CD8-positive, alpha-beta memory T cell (primary cell): ENCODE measurements at regions of chr14 and their contacts with region 1.

Region 1: GRCh38 chr14:21978184-21978998 is 304.8 kb upstream of the OR4E1 start:
- DNase-seq: peak; percentile 29 to 74 (median 41)
- H3K4me3 ChIP-seq: peak overlapping the region; percentile 15
- H3K4me3 Mint-ChIP-seq: peak overlapping the region; percentile 34 to 84 (median 70)
- H3K27ac ChIP-seq: no peak overlapping the region
- H3K27ac Mint-ChIP-seq: peak overlapping the region in 7 of 8 donors; percentile 17 to 86 (median 58)
- H3K4me1 ChIP-seq: no peaks in the 10 kb centered on the region
- H3K4me1 Mint-ChIP-seq: peaks cover 9 to 23% (median 9%) of the 10 kb centered on the region in 3 donors
- H3K27me3 ChIP-seq: no peaks in the 10 kb centered on the region
- H3K27me3 Mint-ChIP-seq: peaks cover 0 to 4% of the 10 kb centered on the region in 2 donors

Region 2: GRCh38 chr14:21933681-21934080 is 44.7 kb before region 1 on chr14:
- CTCF ChIA-PET with region 1: no interaction called
- POLR2A ChIA-PET with region 1: no interaction called
- DNase-seq: peak in 1 of 5 donors; percentile 18
- H3K4me3 ChIP-seq: no peak overlapping the region
- H3K4me3 Mint-ChIP-seq: no peak overlapping the region
- H3K27ac ChIP-seq: no peak overlapping the region
- H3K27ac Mint-ChIP-seq: no peak overlapping the region
- H3K4me1 ChIP-seq: no peaks in the 10 kb centered on the region
- H3K4me1 Mint-ChIP-seq: peaks cover 0 to 3% (median 3%) of the 10 kb centered on the region in 3 donors
- H3K27me3 ChIP-seq: no peaks in the 10 kb centered on the region
- H3K27me3 Mint-ChIP-seq: peaks cover 2 to 4% of the 10 kb centered on the region in 2 donors

Region 3: DNA sequence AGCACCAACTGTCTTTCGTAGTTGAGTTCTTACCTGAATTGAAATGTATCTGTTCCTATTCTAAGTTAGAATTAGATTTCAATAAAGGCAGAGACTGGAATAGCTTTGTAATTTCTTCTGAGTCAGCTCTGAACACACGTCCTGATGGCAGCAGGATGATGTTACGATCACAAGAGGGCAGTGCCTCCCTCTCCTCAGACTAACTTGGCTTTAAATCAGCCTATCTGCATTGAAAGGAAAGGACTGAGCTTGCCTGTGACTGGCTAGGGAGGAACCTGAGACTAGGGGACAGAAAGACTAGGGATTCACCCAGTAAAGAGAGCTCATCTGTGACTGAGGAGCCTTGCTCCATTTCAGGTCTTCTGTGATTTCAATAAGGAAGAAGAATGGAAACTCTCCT is 18.9 kb after region 1 on chr14:
- CTCF ChIA-PET with region 1: interaction called, 27 read pairs
- POLR2A ChIA-PET with region 1: interaction called, 4 read pairs
- DNase-seq: peak in 3 of 5 donors; percentile 36 to 57 (median 47)
- H3K4me3 ChIP-seq: peak overlapping the region; percentile 18
- H3K4me3 Mint-ChIP-seq: peak overlapping the region; percentile 79 to 96 (median 90)
- H3K27ac ChIP-seq: no peak overlapping the region
- H3K27ac Mint-ChIP-seq: peak overlapping the region; percentile 54 to 91 (median 86)
- H3K4me1 ChIP-seq: no peaks in the 10 kb centered on the region
- H3K4me1 Mint-ChIP-seq: peaks cover 3 to 15% (median 4%) of the 10 kb centered on the region in 3 donors
- H3K27me3 ChIP-seq: no peaks in the 10 kb centered on the region
- H3K27me3 Mint-ChIP-seq: no peaks in the 10 kb centered on the region

Region 4: GRCh38 chr14:22047115-22047514 is 68.7 kb after region 1 on chr14:
- CTCF ChIA-PET with region 1: no interaction called
- POLR2A ChIA-PET with region 1: no interaction called
- DNase-seq: peak in 3 of 5 donors; percentile 37 to 59 (median 57)
- H3K4me3 ChIP-seq: no peak overlapping the region
- H3K4me3 Mint-ChIP-seq: peak overlapping the region in 3 of 7 donors; percentile 58 to 63 (median 60)
- H3K27ac ChIP-seq: no peak overlapping the region
- H3K27ac Mint-ChIP-seq: peak overlapping the region in 7 of 8 donors; percentile 42 to 80 (median 68)
- H3K4me1 ChIP-seq: peaks cover 8% of the 10 kb centered on the region
- H3K4me1 Mint-ChIP-seq: peaks cover 13 to 39% (median 15%) of the 10 kb centered on the region in 3 donors
- H3K27me3 ChIP-seq: no peaks in the 10 kb centered on the region
- H3K27me3 Mint-ChIP-seq: peaks cover 0 to 5% of the 10 kb centered on the region in 2 donors